Esophagus squamous epithelium (tissue), 5 donors: ENCODE measurements at regions of chr20 and their contacts with region 1.

Region 1: GRCh38 chr20:20076297-20077065 is 24.1 kb downstream of the CFAP61 start:
- DNase-seq: no peak
- H3K4me3 ChIP-seq: no peak overlapping the region
- H3K27ac ChIP-seq: no peak overlapping the region
- H3K4me1 ChIP-seq: no peaks in the 10 kb centered on the region
- H3K27me3 ChIP-seq: peaks cover 0 to 50% (median 0%) of the 10 kb centered on the region in 4 donors
- CTCF ChIP-seq: no peak
- POLR2A ChIP-seq: no peak

Region 2: DNA sequence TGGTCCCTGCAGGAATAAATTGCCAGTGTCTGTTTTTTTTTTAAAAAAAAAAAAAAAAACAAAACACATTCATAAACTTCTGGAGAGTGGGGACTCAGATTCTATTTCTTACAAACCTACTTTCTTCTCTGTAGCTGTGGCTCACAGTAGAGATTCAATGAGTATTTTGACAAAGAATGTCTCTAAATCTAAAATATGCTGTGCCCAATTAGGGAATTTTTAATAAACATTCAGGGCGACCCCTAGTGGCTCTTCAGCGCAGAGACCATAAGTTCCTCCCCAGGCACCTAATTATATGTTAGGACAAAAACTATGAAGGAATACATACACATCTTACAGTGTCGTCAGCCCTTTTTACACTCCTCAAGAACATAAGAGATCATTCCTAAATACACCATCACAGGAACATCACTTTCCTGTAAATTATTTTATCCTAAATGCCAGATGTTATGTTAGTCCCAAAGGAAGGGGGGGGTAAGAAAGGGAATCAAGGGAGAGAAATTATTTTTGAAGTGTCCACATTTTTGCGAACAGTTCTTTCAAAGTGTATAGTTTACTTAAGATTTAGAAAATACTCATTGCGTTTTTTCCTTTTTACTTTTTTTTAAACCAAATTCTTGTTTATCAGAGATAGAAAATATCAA is 81.1 kb before region 1 on chr20:
- intact Hi-C with region 1: no loop called
- DNase-seq: no peak
- H3K4me3 ChIP-seq: no peak overlapping the region
- H3K27ac ChIP-seq: peak overlapping the region in 2 of 4 donors; percentile 88 to 89
- H3K4me1 ChIP-seq: peaks cover 20 to 93% (median 51%) of the 10 kb centered on the region in 3 donors
- H3K27me3 ChIP-seq: no peaks in the 10 kb centered on the region
- CTCF ChIP-seq: peak; percentile 63 to 84 (median 74)
- POLR2A ChIP-seq: no peak

Region 3: DNA sequence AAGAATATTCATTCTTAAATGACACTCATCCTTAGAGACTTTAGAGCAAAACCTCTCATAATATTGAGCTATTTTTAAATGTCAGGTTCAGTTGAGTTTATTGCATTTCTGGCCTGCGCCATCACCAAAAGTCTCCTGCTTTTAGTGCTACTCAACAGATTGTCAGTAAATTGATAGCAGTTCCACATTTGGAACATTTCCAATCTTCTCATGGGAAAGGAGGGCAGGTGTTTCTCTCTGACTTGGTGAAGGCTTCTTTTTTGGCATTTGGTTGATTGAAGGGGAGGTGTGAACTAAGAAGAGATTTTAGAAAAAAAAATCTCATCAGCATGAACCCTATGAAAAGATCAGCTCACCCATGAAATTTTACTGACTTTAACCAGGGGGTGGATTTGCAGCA is 165.5 kb after region 1 on chr20:
- intact Hi-C with region 1: loop called (anchors 5 kb)
- DNase-seq: no peak
- H3K4me3 ChIP-seq: no peak overlapping the region
- H3K27ac ChIP-seq: no peak overlapping the region
- H3K4me1 ChIP-seq: no peaks in the 10 kb centered on the region
- H3K27me3 ChIP-seq: peaks cover 0 to 4% (median 0%) of the 10 kb centered on the region in 4 donors
- CTCF ChIP-seq: no peak
- POLR2A ChIP-seq: no peak